Right ventricle myocardium superior (tissue), 1 donor: ENCODE measurements at regions of chr2 and their contacts with region 1.

Region 1: GRCh38 chr2:151289369-151290088 is at the start of gene NMI:
- DNase-seq: peak; percentile 88
- ATAC-seq: peak; percentile 94
- total RNA-seq, gene NMI: 3.6 TPM

Region 2: GRCh38 chr2:151409601-151410484 is 120.3 kb after region 1 on chr2 and contains the start of gene RIF1:
- intact Hi-C with region 1: loop called (anchors 5 kb)
- DNase-seq: peak; percentile 92
- ATAC-seq: peak; percentile 100
- total RNA-seq, gene RIF1: 14.6 TPM